ENCODE measurements at regions of chr7 and their contacts with region 1.

Region 1: DNA sequence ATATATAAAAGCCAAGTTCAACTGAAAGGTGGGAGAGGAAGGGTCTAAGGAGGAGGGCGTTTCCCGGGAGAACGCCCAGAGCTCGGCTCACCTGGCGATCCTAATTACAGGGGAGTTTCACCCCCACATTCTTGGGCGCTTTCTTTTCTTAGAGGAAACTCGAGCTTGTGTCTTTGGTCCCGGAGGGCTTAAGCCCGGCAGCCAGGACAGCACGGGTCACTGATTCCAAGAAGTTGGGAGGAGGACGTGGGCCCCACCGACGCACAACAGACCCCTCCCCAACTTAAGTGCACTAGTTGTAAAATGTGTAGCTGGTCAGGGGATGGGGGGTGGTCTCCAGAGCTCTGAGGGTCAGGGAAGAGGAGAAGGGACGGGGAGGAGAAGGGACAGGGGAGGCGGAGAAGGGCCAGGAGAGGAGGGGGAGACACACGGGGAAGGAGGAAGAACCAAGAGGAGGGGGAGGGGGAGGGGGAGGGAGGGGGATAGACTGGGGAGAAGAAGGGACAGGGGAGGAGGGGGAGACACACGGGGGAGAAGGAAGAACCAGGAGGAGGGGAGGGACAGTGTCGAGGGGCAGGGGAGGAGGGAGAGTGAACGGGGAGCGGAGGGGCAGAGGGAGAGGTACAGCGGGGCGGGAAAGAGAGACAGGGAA is 874 bp downstream of the BAIAP2L1 start:
- H3K4me3 Mint-ChIP-seq: peak overlapping the region; percentile 20
- H3K27ac Mint-ChIP-seq: no peak overlapping the region
- H3K4me1 Mint-ChIP-seq: peaks cover 7% of the 10 kb centered on the region
- H3K27me3 Mint-ChIP-seq: peaks cover 72% of the 10 kb centered on the region

Region 2: DNA sequence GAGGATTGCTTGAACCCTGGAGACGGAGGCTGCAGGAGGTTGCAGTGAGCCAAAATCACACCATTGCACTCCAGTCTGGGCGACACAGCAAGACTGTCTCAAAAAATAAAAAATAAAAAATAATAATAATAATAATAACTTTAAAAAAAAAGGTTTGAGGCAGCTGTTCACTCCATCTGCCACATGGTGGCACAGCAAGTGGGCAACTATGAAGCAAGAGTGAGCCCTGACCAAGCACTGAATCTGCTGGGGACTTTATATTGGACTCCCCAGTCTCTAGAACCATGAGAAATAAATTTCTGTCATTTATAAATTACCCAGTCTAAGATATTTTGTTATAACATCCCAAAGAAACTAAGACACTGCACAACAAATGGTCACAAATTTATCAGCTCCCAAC is 133.2 kb before region 1 on chr7:
- intact Hi-C with region 1: loop called (anchors 10 kb)
- H3K4me3 Mint-ChIP-seq: no peak overlapping the region
- H3K27ac Mint-ChIP-seq: peak overlapping the region; percentile 41
- H3K4me1 Mint-ChIP-seq: peaks cover 14% of the 10 kb centered on the region
- H3K27me3 Mint-ChIP-seq: no peaks in the 10 kb centered on the region